PC-9 (cell line): ENCODE measurements at regions of chr6 and their contacts with region 1.

Region 1: DNA sequence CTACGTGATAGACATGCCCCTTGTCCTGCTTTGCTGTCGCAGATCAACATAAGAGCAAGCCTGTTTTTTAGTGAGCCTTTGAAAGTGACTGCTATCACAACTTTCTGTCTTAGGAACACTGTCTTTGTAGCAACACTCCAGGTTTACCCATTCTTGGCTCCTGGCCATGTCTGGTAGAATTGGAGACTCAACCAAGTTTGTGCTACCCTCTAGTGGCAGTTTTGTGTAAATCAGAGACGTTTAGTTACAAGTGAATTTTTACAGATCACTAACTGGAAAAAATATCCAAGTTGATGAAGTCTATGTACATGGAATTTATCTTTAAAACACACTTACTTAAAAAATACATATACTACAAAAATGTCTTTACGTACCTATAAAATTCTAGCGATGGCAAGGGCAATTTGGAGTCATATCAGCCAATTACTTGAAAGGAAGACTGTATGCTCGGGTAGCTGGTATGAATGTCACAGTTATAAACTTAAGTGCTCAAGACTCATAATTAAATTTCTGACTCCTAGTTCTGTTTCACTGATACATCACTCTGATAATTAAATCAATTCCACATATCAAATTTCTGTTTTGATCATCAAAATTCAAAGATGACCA is 101.4 kb downstream of the ADGB start:
- DNase-seq: peak; percentile 43 to 63
- H3K4me3 ChIP-seq: no peak overlapping the region
- H3K27ac ChIP-seq: no peak overlapping the region
- H3K4me1 ChIP-seq: no peaks in the 10 kb centered on the region
- H3K27me3 ChIP-seq: no peaks in the 10 kb centered on the region
- CTCF ChIP-seq: peak; percentile 82

Region 2: GRCh38 chr6:145929037-145929633 is 771.0 kb before region 1 on chr6:
- CTCF ChIA-PET with region 1: no interaction called
- POLR2A ChIA-PET with region 1: no interaction called
- intact Hi-C with region 1: loop called (anchors 2 kb)
- DNase-seq: peak in 1 of 2 experiments; percentile 1
- H3K4me3 ChIP-seq: no peak overlapping the region
- H3K27ac ChIP-seq: no peak overlapping the region
- H3K4me1 ChIP-seq: no peaks in the 10 kb centered on the region
- H3K27me3 ChIP-seq: no peaks in the 10 kb centered on the region
- CTCF ChIP-seq: peak; percentile 84